ENCODE measurements at regions of chr12 and their contacts with region 1.

Region 1: GRCh38 chr12:15842108-15842507 is 40.1 kb upstream of the STRAP start:
- DNase-seq: peak; percentile 47
- H3K4me3 ChIP-seq: no peak overlapping the region
- H3K27ac ChIP-seq: no peak overlapping the region
- H3K4me1 ChIP-seq: peaks cover 4% of the 10 kb centered on the region
- H3K27me3 ChIP-seq: no peaks in the 10 kb centered on the region
- CTCF ChIP-seq: no peak

Region 2: GRCh38 chr12:15669256-15669948 is 172.7 kb before region 1 on chr12:
- CTCF ChIA-PET with region 1: no interaction called
- dilution Hi-C with region 1: no loop called
- in situ Hi-C with region 1: no loop called
- intact Hi-C with region 1: no loop called
- DNase-seq: no peak
- H3K4me3 ChIP-seq: no peak overlapping the region
- H3K27ac ChIP-seq: no peak overlapping the region
- H3K4me1 ChIP-seq: no peaks in the 10 kb centered on the region
- H3K27me3 ChIP-seq: no peaks in the 10 kb centered on the region
- CTCF ChIP-seq: no peak

Region 3: DNA sequence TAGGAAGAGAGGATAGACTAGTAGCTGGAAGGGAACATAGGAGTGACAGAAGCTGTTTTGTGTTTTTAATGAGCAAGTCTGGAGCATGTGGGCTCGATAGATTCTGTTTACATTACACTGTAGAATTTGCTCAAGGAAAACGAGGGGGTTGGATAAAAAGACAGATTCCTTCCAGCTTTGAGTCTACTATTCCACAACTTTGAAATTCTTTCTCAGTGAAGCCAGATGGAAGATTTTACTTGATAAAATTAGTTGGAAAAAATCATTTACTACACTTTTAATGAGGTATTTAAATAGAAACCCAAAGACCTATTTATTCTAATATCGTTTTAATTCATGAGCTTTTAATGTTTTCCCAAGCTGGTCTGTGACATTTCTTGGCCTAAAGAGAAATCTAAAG is 33.5 kb before region 1 on chr12:
- CTCF ChIA-PET with region 1: no interaction called
- dilution Hi-C with region 1: no loop called
- in situ Hi-C with region 1: no loop called
- intact Hi-C with region 1: loop called (anchors 5 kb)
- DNase-seq: no peak
- H3K4me3 ChIP-seq: no peak overlapping the region
- H3K27ac ChIP-seq: no peak overlapping the region
- H3K4me1 ChIP-seq: peaks cover 6% of the 10 kb centered on the region
- H3K27me3 ChIP-seq: no peaks in the 10 kb centered on the region
- CTCF ChIP-seq: no peak

Region 4: DNA sequence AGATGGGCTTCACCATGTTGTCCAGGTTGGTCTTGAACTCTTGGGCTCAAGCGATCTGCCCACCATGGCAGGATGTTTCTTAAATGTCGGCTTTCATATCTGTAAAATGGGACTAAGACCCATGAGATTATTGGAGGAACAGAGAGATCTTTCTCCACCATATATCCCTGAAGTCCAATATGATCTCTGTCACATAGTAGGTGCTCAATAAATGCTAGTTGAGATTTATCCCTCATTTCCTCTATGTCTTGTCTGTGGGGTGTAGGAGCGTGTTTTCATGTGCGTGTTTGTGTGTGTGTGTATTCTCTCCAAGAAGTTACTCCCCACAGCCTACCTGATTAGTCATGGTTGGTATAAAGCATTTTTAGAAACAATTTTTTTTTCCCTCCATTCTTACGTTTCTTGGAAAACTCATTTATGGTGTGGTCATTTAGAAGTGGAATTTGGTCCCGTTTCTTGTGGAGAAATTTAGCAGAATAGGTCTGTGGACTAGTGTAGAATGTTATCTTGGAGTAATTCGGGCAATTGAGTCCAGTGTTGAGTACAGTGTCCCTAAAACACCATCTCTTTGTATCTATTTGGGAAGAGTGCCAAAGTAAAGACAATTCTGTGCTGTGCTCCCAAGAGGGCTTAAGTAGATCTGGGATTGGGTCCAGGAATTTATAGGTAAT is 44.4 kb after region 1 on chr12:
- CTCF ChIA-PET with region 1: no interaction called
- dilution Hi-C with region 1: no loop called
- in situ Hi-C with region 1: no loop called
- intact Hi-C with region 1: no loop called
- DNase-seq: no peak
- H3K4me3 ChIP-seq: no peak overlapping the region
- H3K27ac ChIP-seq: no peak overlapping the region
- H3K4me1 ChIP-seq: peaks cover 19% of the 10 kb centered on the region
- H3K27me3 ChIP-seq: no peaks in the 10 kb centered on the region
- CTCF ChIP-seq: no peak

Measured in mammary epithelial cell (primary cell).